Transverse colon (tissue), 4 donors: ENCODE measurements at regions of chr4 and their contacts with region 1.

Region 1: GRCh38 chr4:15649914-15650545 is 5.1 kb downstream of the FBXL5 start:
- DNase-seq: peak; percentile 29
- H3K4me3 ChIP-seq: no peak overlapping the region
- H3K27ac ChIP-seq: peak overlapping the region; percentile 11 to 100 (median 59)
- H3K4me1 ChIP-seq: peaks cover 17 to 71% (median 41%) of the 10 kb centered on the region in 4 donors
- H3K27me3 ChIP-seq: no peaks in the 10 kb centered on the region
- CTCF ChIP-seq: peak; percentile 56 to 65 (median 58)
- EP300 ChIP-seq: no peak
- POLR2A ChIP-seq: no peak

Region 2: GRCh38 chr4:15231265-15232091 is 418.6 kb before region 1 on chr4:
- in situ Hi-C with region 1: loop called in 1 of 4 experiments (anchors 25 kb)
- intact Hi-C with region 1: no loop called
- DNase-seq: peak; percentile 80
- H3K4me3 ChIP-seq: no peak overlapping the region
- H3K27ac ChIP-seq: peak overlapping the region in 1 of 4 donors; percentile 28
- H3K4me1 ChIP-seq: peaks cover 4 to 21% (median 7%) of the 10 kb centered on the region in 4 donors
- H3K27me3 ChIP-seq: no peaks in the 10 kb centered on the region
- CTCF ChIP-seq: peak; percentile 61 to 71 (median 66)
- EP300 ChIP-seq: no peak
- POLR2A ChIP-seq: no peak

Region 3: DNA sequence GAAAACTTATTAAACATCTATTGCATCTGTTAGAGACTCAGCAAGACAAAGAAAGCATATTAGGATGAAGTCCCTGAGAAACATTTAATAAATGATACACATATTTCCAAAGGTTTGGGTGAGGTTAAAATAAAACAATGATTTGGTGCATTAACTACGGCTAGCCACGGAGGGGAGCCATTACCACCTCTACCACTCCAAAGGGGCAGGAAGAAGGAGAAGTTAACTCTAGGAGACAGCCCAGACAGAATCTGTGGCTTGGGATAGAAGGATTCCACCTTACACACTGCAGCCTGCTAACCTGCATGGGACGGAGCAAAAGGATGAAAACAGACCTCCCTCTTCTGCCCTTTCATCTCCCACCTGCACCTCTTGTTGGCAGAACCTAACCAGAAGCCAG is 411.3 kb before region 1 on chr4:
- in situ Hi-C with region 1: loop called in 2 of 4 experiments (anchors 10 to 25 kb)
- intact Hi-C with region 1: no loop called
- DNase-seq: no peak
- H3K4me3 ChIP-seq: no peak overlapping the region
- H3K27ac ChIP-seq: no peak overlapping the region
- H3K4me1 ChIP-seq: peaks cover 0 to 6% (median 2%) of the 10 kb centered on the region in 4 donors
- H3K27me3 ChIP-seq: no peaks in the 10 kb centered on the region
- CTCF ChIP-seq: peak; percentile 35 to 57 (median 43)
- EP300 ChIP-seq: no peak
- POLR2A ChIP-seq: no peak

Region 4: GRCh38 chr4:15479089-15479912 is 170.7 kb before region 1 on chr4:
- in situ Hi-C with region 1: no loop called
- intact Hi-C with region 1: loop called (anchors 5 kb)
- DNase-seq: no peak
- H3K4me3 ChIP-seq: peak overlapping the region in 3 of 4 donors; percentile 17 to 35 (median 21)
- H3K27ac ChIP-seq: peak overlapping the region; percentile 57 to 83 (median 82)
- H3K4me1 ChIP-seq: peaks cover 0 to 8% (median 6%) of the 10 kb centered on the region in 4 donors
- H3K27me3 ChIP-seq: no peaks in the 10 kb centered on the region
- CTCF ChIP-seq: peak; percentile 40 to 58 (median 50)
- EP300 ChIP-seq: no peak
- POLR2A ChIP-seq: no peak

Region 5: GRCh38 chr4:15551740-15552446 is 98.1 kb before region 1 on chr4:
- in situ Hi-C with region 1: no loop called
- intact Hi-C with region 1: loop called (anchors 10 kb)
- DNase-seq: no peak
- H3K4me3 ChIP-seq: no peak overlapping the region
- H3K27ac ChIP-seq: no peak overlapping the region
- H3K4me1 ChIP-seq: no peaks in the 10 kb centered on the region
- H3K27me3 ChIP-seq: no peaks in the 10 kb centered on the region
- CTCF ChIP-seq: no peak
- EP300 ChIP-seq: no peak
- POLR2A ChIP-seq: no peak

Region 6: DNA sequence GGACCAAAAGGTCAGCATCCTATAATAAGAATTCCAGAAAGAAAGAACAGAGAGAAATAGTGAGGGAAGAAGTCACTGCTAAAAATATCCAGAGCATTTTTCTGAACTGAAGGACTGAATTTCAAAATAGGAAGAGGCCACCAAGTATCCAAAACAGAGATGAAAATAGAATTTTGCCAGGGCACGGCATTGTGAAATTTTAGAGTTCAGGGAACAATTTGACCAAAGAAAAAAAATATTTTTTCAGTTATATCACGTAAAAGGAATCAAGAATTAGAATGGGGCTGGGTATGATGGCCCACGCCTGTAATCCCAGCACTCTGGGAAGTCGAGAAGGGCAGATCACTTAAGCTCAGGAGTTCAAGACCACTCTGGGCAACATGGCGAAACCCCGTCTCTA is 223.1 kb after region 1 on chr4:
- in situ Hi-C with region 1: no loop called
- intact Hi-C with region 1: no loop called
- DNase-seq: no peak
- H3K4me3 ChIP-seq: no peak overlapping the region
- H3K27ac ChIP-seq: no peak overlapping the region
- H3K4me1 ChIP-seq: no peaks in the 10 kb centered on the region
- H3K27me3 ChIP-seq: no peaks in the 10 kb centered on the region
- CTCF ChIP-seq: no peak
- EP300 ChIP-seq: no peak
- POLR2A ChIP-seq: no peak